ENCODE measurements at regions of chrX and their contacts with region 1.

Region 1: DNA sequence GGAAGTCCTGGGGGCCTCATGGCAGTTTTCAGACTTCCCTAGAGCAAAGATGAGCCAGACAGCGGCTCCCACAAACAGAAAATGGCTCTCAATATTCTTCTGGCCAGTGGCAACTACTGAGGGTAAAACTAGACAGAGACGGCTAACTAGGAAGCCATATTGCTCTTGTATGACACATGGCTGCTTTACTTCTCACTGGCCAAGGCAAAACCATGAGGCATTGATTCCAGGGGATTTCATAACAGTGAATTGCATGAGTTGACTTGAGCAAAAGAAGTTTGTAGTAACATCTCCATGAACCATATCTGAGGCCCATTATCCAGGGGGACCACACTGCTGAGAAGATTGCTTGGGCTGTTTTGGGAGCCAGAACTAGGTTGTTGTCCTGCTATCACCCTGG is 13.7 kb upstream of the TLR8 start:
- DNase-seq: no peak
- H3K4me3 ChIP-seq: no peak overlapping the region
- H3K27ac ChIP-seq: no peak overlapping the region
- H3K4me1 ChIP-seq: no peaks in the 10 kb centered on the region
- H3K27me3 ChIP-seq: no peaks in the 10 kb centered on the region
- CTCF ChIP-seq: no peak
- EP300 ChIP-seq: no peak
- POLR2A ChIP-seq: no peak

Region 2: DNA sequence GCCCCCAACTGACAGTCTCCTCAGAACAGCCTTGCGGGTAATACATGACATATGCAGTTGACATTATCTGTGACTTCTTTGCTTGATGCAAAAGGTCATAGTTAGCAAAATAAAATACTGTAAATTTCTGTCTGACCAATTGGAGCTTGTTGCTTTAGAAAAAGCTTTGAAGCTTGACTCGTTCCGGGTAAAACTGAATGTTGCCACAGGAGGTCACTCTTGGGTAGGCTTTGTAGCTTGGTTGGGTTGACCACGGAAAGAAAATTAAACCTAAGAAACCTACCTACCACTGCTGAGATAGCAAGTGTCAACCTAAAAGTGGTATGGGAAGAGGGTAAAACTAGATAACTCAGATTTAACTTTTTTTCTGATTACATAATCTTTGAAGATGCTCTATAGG is 78.3 kb before region 1 on chrX:
- intact Hi-C with region 1: loop called (anchors 1 kb)
- DNase-seq: no peak
- H3K4me3 ChIP-seq: no peak overlapping the region
- H3K27ac ChIP-seq: no peak overlapping the region
- H3K4me1 ChIP-seq: no peaks in the 10 kb centered on the region
- H3K27me3 ChIP-seq: no peaks in the 10 kb centered on the region
- CTCF ChIP-seq: peak in 2 of 4 experiments; percentile 31 to 38
- EP300 ChIP-seq: no peak
- POLR2A ChIP-seq: no peak

Region 3: DNA sequence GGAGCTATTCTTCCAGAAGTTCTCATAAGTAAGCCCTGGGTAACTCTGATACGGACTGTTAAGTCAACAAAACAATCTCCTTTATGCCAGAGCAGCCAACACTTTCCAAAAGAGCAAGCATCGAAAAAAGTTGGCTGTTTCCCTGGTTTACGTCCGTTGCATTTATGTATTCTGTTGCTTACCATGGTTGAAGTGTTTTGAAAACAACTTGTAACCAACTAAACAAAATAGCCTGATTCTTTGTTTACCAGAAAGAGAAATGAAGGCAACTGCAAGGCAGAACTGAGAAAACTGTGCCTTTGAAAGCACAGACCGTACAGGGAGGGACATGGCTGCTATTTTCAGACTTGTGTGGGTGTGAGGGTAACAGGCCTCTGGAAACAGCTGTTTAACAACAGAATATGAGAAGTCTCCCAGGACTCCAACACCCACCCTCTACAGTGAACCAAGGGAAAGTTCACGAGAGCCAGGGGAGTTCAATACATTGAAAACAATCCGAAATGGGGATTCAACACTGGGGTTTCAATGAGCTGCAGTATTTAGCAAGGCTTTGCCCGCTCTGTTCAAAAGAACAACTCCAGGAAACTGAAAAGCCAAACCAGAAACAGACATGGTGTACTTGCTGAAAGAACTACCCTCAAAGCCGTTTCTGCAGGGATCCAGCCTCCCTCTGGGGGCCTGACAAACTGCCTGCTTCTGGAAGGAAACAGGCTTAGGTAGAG is 580.9 kb after region 1 on chrX:
- intact Hi-C with region 1: no loop called
- DNase-seq: no peak
- H3K4me3 ChIP-seq: no peak overlapping the region
- H3K27ac ChIP-seq: peak overlapping the region; percentile 44 to 59 (median 53)
- H3K4me1 ChIP-seq: peaks cover 0 to 7% (median 2%) of the 10 kb centered on the region in 4 donors
- H3K27me3 ChIP-seq: no peaks in the 10 kb centered on the region
- CTCF ChIP-seq: no peak
- EP300 ChIP-seq: no peak
- POLR2A ChIP-seq: no peak

Measured in sigmoid colon (tissue), 7 donors.